ENCODE measurements at regions of chr4 and their contacts with region 1.

Region 1: DNA sequence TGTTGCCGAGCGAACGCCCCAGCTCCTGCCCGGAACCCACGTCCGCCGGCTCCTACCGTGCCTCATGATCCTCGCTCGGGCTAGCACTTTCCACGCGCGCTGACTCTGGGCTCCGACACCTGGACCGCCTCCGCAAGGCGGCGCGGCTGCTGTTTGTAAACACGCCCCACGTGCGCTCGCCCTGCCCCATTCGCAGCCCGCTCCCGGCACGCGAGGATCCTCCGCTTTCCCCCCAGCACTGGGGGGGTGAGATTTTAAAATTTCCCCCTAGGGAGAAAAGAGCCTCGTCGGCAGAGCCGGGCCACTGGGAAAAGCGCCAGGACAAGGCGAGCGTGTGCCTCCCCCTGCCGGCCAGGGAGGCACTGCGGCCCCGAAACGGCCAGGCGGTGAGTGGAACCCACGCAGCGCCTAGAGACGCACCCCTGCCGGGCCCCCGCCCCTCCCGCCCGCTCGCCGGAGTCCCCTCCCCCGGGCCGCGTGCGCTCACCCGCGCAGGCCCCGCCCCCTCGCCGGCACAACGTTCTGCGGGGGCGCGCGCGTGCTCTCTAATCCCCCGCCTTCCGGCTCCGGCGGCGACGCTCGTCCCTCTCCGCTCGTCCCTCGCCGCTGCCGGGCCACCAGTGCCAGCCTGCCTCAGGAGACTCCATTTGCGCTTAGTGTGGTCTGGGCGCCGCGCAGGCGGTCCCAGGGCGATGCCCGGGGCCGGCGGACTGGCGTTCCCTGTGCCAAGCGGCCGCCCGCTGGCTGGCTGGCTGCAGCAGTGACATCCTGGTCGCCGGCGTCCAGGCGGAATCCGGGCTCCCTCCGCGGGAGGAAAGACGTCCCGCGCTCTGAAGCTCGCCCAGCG is at the start of gene TIGD2:
- DNase-seq: peak; percentile 87 to 90 (median 89)
- H3K4me3 ChIP-seq: peak within 1 kb of the TSS; percentile 76 to 89
- H3K4me3 Mint-ChIP-seq: peak within 1 kb of the TSS; percentile 90 to 93 (median 91)
- H3K27ac ChIP-seq: peak within 1 kb of the TSS; percentile 58
- H3K27ac Mint-ChIP-seq: peak within 1 kb of the TSS; percentile 80 to 94 (median 91)
- H3K4me1 ChIP-seq: peaks cover 22% of the 10 kb centered on the region
- H3K4me1 Mint-ChIP-seq: peaks cover 15 to 31% (median 23%) of the 10 kb centered on the region in 4 donors
- H3K27me3 ChIP-seq: no peaks in the 10 kb centered on the region
- H3K27me3 Mint-ChIP-seq: peaks cover 0 to 7% of the 10 kb centered on the region in 2 donors
- total RNA-seq, gene TIGD2: 6.7 to 7.1 TPM

Region 2: DNA sequence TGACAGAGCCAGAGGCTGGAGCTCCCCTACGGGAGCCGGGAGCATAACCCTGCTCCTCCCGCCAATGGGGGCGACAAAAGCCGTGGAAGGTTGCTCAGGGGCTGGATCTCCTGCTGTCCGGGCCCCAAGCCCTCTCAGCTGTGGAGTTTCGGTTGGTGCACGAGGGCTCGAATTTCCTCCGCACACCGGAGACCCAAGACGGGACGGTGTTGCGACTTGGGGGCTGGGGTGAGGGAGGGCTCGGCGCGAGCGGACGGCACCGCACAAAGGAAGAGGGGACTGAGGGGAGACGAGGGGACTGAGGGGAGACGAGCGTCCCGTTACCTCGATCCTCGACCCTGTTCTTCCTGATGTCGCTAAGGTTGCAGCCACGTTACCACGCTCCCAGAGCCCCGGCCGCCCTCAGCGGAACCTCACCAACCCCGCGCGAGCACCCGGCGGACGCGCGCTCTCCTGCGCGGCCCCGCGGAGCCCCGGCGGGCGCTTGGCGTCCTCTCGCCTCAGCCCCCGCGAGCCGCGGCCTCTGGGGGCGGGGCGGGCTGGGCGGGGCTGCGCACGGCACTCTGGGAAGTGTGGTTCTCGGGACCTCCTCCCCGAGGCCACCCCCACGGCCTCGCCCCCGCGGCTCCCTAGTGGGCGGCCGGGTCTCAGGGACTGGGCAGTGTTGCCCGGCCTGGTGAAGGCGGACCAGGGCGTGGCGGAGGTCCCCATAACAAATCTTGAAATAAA is 1891.0 kb before region 1 on chr4 and contains the start of gene KLHL8:
- CTCF ChIA-PET with region 1: no interaction called
- POLR2A ChIA-PET with region 1: no interaction called
- intact Hi-C with region 1: loop called (anchors 1 kb)
- DNase-seq: peak; percentile 84 to 91 (median 90)
- H3K4me3 ChIP-seq: peak within 1 kb of the TSS; percentile 82 to 89
- H3K4me3 Mint-ChIP-seq: peak within 1 kb of the TSS; percentile 91 to 98 (median 95)
- H3K27ac ChIP-seq: peak within 1 kb of the TSS; percentile 85
- H3K27ac Mint-ChIP-seq: peak within 1 kb of the TSS; percentile 81 to 96 (median 94)
- H3K4me1 ChIP-seq: peaks cover 16% of the 10 kb centered on the region
- H3K4me1 Mint-ChIP-seq: peaks cover 9 to 23% (median 16%) of the 10 kb centered on the region in 4 donors
- H3K27me3 ChIP-seq: no peaks in the 10 kb centered on the region
- H3K27me3 Mint-ChIP-seq: no peaks in the 10 kb centered on the region
- total RNA-seq, gene KLHL8: 11.0 to 11.4 TPM

Region 3: GRCh38 chr4:88456757-88457306 is 654.4 kb before region 1 on chr4 and contains the start of gene HERC5:
- CTCF ChIA-PET with region 1: no interaction called
- POLR2A ChIA-PET with region 1: no interaction called
- intact Hi-C with region 1: loop called (anchors 1 kb)
- DNase-seq: peak; percentile 92 to 96 (median 95)
- H3K4me3 ChIP-seq: peak within 1 kb of the TSS; percentile 76 to 96
- H3K4me3 Mint-ChIP-seq: peak within 1 kb of the TSS; percentile 96 to 100 (median 100)
- H3K27ac ChIP-seq: peak within 1 kb of the TSS; percentile 71
- H3K27ac Mint-ChIP-seq: peak within 1 kb of the TSS; percentile 89 to 100 (median 100)
- H3K4me1 ChIP-seq: peaks cover 28% of the 10 kb centered on the region
- H3K4me1 Mint-ChIP-seq: peaks cover 21 to 37% (median 28%) of the 10 kb centered on the region in 4 donors
- H3K27me3 ChIP-seq: no peaks in the 10 kb centered on the region
- H3K27me3 Mint-ChIP-seq: no peaks in the 10 kb centered on the region
- total RNA-seq, gene HERC5: 18.6 to 22.1 TPM

Region 4: DNA sequence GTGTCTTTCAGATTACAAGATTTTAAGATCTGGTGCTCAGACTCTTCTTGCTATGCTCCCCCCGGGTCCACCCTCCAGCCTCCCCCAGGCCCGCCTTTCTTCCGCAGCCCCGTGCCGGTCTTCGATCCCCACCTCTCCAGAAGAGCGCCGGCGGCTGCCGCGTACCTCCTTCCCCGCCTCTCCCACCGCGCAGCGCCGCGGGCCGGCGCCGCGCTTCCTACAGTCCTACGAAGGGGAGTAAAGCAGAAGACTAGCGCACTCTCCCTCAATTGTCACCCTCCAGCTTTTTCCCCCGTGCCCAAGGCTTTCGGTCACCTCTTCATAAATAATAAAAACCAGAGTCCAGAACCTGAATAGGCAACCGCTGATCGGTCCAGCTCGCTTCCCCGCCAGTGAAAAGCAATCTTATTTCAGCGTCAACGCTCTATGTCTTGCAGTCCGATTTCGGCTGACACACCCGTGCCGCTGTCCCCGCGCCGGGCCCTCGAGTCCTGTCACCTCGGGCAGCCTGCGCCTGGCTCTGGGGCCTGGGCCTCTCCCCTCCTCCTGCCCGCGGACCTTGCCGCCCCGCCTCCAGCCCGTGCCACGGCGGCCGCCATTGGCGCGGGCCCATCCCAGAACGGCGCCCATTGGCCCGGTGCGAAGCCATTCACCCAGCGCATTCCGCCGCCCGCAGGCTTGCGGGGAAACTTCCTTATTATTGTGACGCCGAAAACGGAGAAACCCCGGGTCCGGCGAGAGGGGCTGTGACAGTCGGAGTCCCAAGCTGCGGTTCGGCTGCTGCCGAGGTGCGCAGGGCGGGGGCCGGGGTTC is 519.2 kb before region 1 on chr4 and contains the start of gene HERC3:
- CTCF ChIA-PET with region 1: no interaction called
- POLR2A ChIA-PET with region 1: no interaction called
- intact Hi-C with region 1: loop called (anchors 5 kb)
- DNase-seq: peak; percentile 87 to 91 (median 90)
- H3K4me3 ChIP-seq: peak within 1 kb of the TSS; percentile 33 to 74
- H3K4me3 Mint-ChIP-seq: peak within 1 kb of the TSS; percentile 95 to 99 (median 98)
- H3K27ac ChIP-seq: peak within 1 kb of the TSS; percentile 89
- H3K27ac Mint-ChIP-seq: peak within 1 kb of the TSS; percentile 96 to 99 (median 99)
- H3K4me1 ChIP-seq: peaks cover 32% of the 10 kb centered on the region
- H3K4me1 Mint-ChIP-seq: peaks cover 29 to 54% (median 37%) of the 10 kb centered on the region in 4 donors
- H3K27me3 ChIP-seq: no peaks in the 10 kb centered on the region
- H3K27me3 Mint-ChIP-seq: no peaks in the 10 kb centered on the region
- total RNA-seq, gene HERC3: 95.5 to 97.1 TPM

Region 5: DNA sequence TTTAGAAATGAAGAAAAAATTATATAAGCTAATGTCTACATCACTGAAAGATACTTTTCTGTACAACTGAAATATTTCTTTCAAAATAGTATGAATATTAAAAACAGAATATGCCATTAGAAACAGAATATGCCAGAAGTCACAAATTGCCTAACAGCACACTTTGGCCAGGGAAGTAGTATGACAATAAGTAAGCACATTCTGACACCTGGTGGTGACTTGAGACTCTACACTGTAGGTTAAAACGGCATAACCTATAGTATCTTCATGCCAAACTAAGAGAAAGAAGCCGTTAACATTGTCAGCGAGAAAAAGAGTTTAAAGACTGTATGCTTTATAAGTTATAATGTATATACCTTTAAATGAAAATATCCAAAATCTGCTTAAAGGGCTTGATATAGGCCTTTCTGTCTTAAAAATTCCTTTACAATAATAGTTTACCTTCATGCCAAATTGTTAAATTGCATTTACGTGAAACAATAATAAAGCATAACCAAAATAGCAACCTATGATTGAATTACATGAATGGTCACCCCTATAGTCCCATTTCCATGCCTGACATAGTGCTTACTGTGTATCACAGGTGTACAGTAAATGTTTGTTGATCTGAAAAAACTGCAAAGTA is 87.0 kb before region 1 on chr4:
- CTCF ChIA-PET with region 1: interaction called, 4 read pairs
- POLR2A ChIA-PET with region 1: interaction called, 3 read pairs
- intact Hi-C with region 1: loop called (anchors 1 kb)
- DNase-seq: peak; percentile 69 to 75 (median 73)
- H3K4me3 ChIP-seq: no peak overlapping the region
- H3K4me3 Mint-ChIP-seq: no peak overlapping the region
- H3K27ac ChIP-seq: no peak overlapping the region
- H3K27ac Mint-ChIP-seq: peak overlapping the region in 1 of 7 donors; percentile 39
- H3K4me1 ChIP-seq: no peaks in the 10 kb centered on the region
- H3K4me1 Mint-ChIP-seq: peaks cover 0 to 7% (median under 1%) of the 10 kb centered on the region in 4 donors
- H3K27me3 ChIP-seq: no peaks in the 10 kb centered on the region
- H3K27me3 Mint-ChIP-seq: no peaks in the 10 kb centered on the region

Region 6: DNA sequence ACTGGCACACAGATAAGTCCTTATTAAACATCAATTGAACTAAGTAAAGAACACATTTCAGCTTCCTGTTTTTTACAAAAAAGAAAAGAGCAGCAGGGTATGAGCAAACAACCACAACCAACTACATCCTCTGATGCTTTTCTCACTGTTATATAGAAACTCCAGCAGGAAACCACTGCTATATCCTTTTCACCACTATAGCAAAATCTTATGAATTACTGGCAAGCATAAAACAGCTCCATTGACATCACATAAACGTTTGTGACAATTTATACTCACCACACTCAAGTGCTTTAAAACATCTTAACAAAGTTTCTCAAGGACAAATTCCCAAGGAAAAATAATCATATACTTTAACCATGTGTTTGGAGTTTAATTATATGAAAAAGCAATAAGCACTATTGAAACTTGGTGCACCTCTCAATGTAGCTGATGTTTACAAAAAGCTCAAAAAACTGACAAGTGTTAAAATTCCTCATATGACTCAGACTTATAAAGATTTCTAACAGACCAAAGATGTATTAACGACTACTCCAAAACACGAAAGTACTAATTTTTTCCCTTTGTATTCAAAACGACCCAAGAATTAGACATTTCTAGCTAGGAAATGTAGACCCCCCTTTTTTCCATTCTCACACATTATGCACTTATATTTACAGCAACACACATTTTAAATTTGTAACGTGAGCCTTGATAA is 183.5 kb after region 1 on chr4:
- CTCF ChIA-PET with region 1: no interaction called
- POLR2A ChIA-PET with region 1: no interaction called
- intact Hi-C with region 1: loop called (anchors 2 kb)
- DNase-seq: peak; percentile 62 to 87 (median 79)
- H3K4me3 ChIP-seq: peak overlapping the region in 1 of 2 donors; percentile 51
- H3K4me3 Mint-ChIP-seq: peak overlapping the region; percentile 70 to 91 (median 80)
- H3K27ac ChIP-seq: peak overlapping the region; percentile 70
- H3K27ac Mint-ChIP-seq: peak overlapping the region; percentile 94 to 98 (median 97)
- H3K4me1 ChIP-seq: peaks cover 92% of the 10 kb centered on the region
- H3K4me1 Mint-ChIP-seq: peaks cover 63 to 98% (median 78%) of the 10 kb centered on the region in 4 donors
- H3K27me3 ChIP-seq: no peaks in the 10 kb centered on the region
- H3K27me3 Mint-ChIP-seq: no peaks in the 10 kb centered on the region

Measured in CD4-positive, alpha-beta memory T cell (primary cell).